ENCODE measurements at regions of chr7 and their contacts with region 1.

Region 1: GRCh38 chr7:106659963-106660861 is 746 bp downstream of the CCDC71L start:
- DNase-seq: peak; percentile 92
- ATAC-seq: peak; percentile 66
- H3K4me3 Mint-ChIP-seq: peak overlapping the region; percentile 87
- H3K27ac Mint-ChIP-seq: peak overlapping the region; percentile 93
- H3K4me1 Mint-ChIP-seq: peaks cover 31% of the 10 kb centered on the region
- H3K27me3 Mint-ChIP-seq: no peaks in the 10 kb centered on the region
- CTCF ChIP-seq: peak; percentile 88

Region 2: DNA sequence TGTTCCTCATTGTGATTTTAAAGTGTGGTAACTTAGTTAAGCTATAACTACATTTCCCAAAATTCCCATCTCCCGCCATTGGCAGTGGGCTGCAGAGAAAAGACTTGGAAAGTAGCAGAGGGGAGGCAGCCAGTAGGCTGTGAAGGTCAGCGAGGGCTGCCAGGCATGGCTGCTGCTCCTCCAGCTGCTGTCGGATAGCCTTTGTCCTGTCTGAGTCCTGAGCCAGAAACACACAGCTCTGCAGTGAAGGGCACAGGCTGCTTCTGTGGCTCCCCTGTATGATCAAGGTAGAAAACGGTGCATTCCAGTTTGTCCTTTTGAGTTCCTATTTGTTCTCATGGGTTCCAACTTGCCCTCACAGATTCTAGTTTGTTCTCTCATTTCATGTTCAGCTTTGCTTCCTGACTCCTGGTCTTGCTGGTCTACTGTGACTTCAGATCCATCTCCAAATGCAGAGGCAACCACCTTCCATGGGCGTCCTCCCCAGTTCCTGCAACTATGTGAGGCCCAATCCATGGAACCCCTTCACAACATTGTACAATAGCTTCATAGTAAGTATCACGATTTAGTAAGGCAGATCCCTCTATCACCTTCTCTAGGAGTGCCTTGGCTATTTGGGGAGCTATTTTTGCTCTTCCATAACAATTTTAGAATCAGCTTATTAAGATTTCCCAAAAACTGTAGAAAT is 579.8 kb before region 1 on chr7:
- CTCF ChIA-PET with region 1: no interaction called
- POLR2A ChIA-PET with region 1: no interaction called
- intact Hi-C with region 1: no loop called
- DNase-seq: no peak
- ATAC-seq: no peak
- H3K4me3 Mint-ChIP-seq: no peak overlapping the region
- H3K27ac Mint-ChIP-seq: no peak overlapping the region
- H3K4me1 Mint-ChIP-seq: peaks cover 22% of the 10 kb centered on the region
- H3K27me3 Mint-ChIP-seq: no peaks in the 10 kb centered on the region
- CTCF ChIP-seq: no peak

Region 3: GRCh38 chr7:106524690-106525059 is 135.5 kb before region 1 on chr7:
- CTCF ChIA-PET with region 1: no interaction called
- POLR2A ChIA-PET with region 1: no interaction called
- intact Hi-C with region 1: no loop called
- DNase-seq: no peak
- ATAC-seq: no peak
- H3K4me3 Mint-ChIP-seq: no peak overlapping the region
- H3K27ac Mint-ChIP-seq: no peak overlapping the region
- H3K4me1 Mint-ChIP-seq: no peaks in the 10 kb centered on the region
- H3K27me3 Mint-ChIP-seq: peaks cover 5% of the 10 kb centered on the region
- CTCF ChIP-seq: no peak

Region 4: GRCh38 chr7:106542550-106543220 is 117.5 kb before region 1 on chr7:
- CTCF ChIA-PET with region 1: interaction called, 30 read pairs
- POLR2A ChIA-PET with region 1: no interaction called
- intact Hi-C with region 1: no loop called
- DNase-seq: peak; percentile 70
- ATAC-seq: peak; percentile 86
- H3K4me3 Mint-ChIP-seq: no peak overlapping the region
- H3K27ac Mint-ChIP-seq: no peak overlapping the region
- H3K4me1 Mint-ChIP-seq: peaks cover 8% of the 10 kb centered on the region
- H3K27me3 Mint-ChIP-seq: peaks cover 3% of the 10 kb centered on the region
- CTCF ChIP-seq: peak; percentile 60

Region 5: GRCh38 chr7:106615808-106616707 is 44.2 kb before region 1 on chr7:
- CTCF ChIA-PET with region 1: no interaction called
- POLR2A ChIA-PET with region 1: no interaction called
- intact Hi-C with region 1: no loop called
- DNase-seq: no peak
- ATAC-seq: no peak
- H3K4me3 Mint-ChIP-seq: no peak overlapping the region
- H3K27ac Mint-ChIP-seq: no peak overlapping the region
- H3K4me1 Mint-ChIP-seq: no peaks in the 10 kb centered on the region
- H3K27me3 Mint-ChIP-seq: no peaks in the 10 kb centered on the region
- CTCF ChIP-seq: no peak

Region 6: GRCh38 chr7:106679153-106679931 is 19.1 kb after region 1 on chr7:
- CTCF ChIA-PET with region 1: interaction called, 16 read pairs
- POLR2A ChIA-PET with region 1: no interaction called
- intact Hi-C with region 1: no loop called
- DNase-seq: peak; percentile 64
- ATAC-seq: peak; percentile 97
- H3K4me3 Mint-ChIP-seq: no peak overlapping the region
- H3K27ac Mint-ChIP-seq: peak overlapping the region; percentile 0
- H3K4me1 Mint-ChIP-seq: peaks cover 11% of the 10 kb centered on the region
- H3K27me3 Mint-ChIP-seq: no peaks in the 10 kb centered on the region
- CTCF ChIP-seq: no peak

Region 7: GRCh38 chr7:106717955-106718871 is 58.0 kb after region 1 on chr7:
- CTCF ChIA-PET with region 1: interaction called, 16 read pairs
- POLR2A ChIA-PET with region 1: interaction called, 11 read pairs
- intact Hi-C with region 1: no loop called
- DNase-seq: peak; percentile 94
- ATAC-seq: peak; percentile 96
- H3K4me3 Mint-ChIP-seq: no peak overlapping the region
- H3K27ac Mint-ChIP-seq: no peak overlapping the region
- H3K4me1 Mint-ChIP-seq: peaks cover 15% of the 10 kb centered on the region
- H3K27me3 Mint-ChIP-seq: peaks cover 2% of the 10 kb centered on the region
- CTCF ChIP-seq: no peak

Region 8: GRCh38 chr7:106731187-106731586 is 71.0 kb after region 1 on chr7:
- CTCF ChIA-PET with region 1: interaction called, 138 read pairs
- POLR2A ChIA-PET with region 1: interaction called, 13 read pairs
- intact Hi-C with region 1: loop called (anchors 1 kb)
- DNase-seq: no peak
- ATAC-seq: no peak
- H3K4me3 Mint-ChIP-seq: no peak overlapping the region
- H3K27ac Mint-ChIP-seq: no peak overlapping the region
- H3K4me1 Mint-ChIP-seq: peaks cover 34% of the 10 kb centered on the region
- H3K27me3 Mint-ChIP-seq: no peaks in the 10 kb centered on the region
- CTCF ChIP-seq: no peak

Region 9: DNA sequence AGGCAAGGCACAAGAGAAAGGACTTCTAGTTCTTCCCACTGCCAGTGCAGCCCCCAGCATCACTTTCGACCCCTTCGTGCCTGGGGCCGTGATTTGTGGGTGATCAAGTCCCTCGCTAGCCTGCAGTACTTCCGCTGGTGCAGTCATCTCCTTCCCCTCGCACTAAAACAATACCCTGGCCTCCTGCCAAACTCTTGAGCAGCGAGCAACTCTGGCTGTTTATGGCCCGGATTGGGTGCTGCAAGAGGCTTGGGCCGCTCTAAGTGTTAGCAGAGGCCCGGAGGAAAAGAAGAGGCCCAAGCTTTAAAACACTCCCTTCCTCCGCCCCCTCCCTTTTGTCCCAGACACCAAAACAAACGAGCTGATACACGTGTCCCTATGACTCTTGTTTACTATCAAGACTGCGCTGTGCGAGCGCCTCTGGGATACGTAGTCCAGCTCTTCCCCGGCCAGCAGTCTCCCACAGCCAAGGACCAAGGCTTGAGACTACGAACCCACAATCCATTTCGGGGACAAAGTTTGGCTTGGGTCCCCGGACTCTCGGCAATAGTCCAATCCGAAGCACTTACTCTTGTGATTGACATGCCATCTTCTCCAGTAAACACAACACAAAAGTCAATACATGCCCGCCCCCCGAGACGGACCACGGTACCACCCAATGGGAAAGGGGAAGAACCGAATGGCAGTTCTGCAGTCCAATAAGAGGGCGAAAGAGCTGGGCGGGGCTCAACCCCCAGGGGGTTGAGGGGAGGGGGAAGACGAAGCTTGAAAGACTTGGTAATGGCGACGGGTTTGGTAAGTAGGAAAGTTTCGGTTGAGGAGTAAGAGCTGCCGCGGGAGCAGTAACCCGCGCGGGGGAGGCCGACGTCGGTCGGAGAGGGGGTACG is 508.3 kb after region 1 on chr7 and contains the start of gene HBP1:
- CTCF ChIA-PET with region 1: no interaction called
- POLR2A ChIA-PET with region 1: no interaction called
- intact Hi-C with region 1: loop called (anchors 5 kb)
- DNase-seq: peak; percentile 99
- ATAC-seq: peak; percentile 82
- H3K4me3 Mint-ChIP-seq: peak within 1 kb of the TSS; percentile 90
- H3K27ac Mint-ChIP-seq: peak within 1 kb of the TSS; percentile 99
- H3K4me1 Mint-ChIP-seq: peaks cover 20% of the 10 kb centered on the region
- H3K27me3 Mint-ChIP-seq: no peaks in the 10 kb centered on the region
- CTCF ChIP-seq: no peak
- total RNA-seq, gene HBP1: 23.8 to 30.5 TPM